ENCODE measurements at regions of chr17 and their contacts with region 1.

Region 1: DNA sequence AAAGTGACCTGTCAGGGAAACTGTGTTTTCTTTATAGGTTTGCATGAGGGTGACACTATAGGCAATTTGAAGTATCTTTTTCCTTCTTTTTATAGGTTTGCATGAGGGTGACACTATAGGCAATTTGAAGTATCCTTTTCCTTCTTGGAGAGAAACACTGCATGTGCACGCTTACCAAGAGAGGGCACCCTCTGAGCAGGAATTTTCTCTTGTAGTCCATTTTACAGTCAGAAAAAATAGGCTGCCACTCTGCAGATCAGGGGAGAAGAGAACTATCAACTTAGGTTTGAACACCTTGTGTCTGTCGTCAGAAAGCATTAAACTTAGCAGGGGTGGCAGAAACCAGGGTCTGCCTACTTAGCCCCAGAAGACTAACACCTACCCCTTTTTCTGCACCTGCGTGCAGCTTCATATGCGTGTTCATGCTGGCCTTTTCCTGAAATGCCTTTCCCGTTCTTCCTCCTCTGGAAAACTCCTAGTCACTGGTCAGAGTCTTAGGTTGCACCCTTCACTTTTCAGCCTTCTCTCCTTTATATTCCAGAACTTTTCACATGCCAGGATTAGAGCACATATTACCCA is 16.4 kb upstream of the SMIM36 start:
- DNase-seq: peak; percentile 74
- H3K4me3 ChIP-seq: no peak overlapping the region; a peak in 1 of 4 replicates
- H3K27ac ChIP-seq: no peak overlapping the region
- H3K4me1 ChIP-seq: peaks cover 0 to 2% of the 10 kb centered on the region in 2 experiments; a peak in 1 of 4 replicates
- H3K27me3 ChIP-seq: no peaks in the 10 kb centered on the region
- CTCF ChIP-seq: peak; percentile 87
- EP300 ChIP-seq: no peak
- RAD21 ChIP-seq: peak; percentile 99

Region 2: GRCh38 chr17:55273579-55274354 is 253.9 kb before region 1 on chr17:
- CTCF ChIA-PET with region 1: no interaction called
- POLR2A ChIA-PET with region 1: no interaction called
- DNase-seq: peak; percentile 68
- H3K4me3 ChIP-seq: no peak overlapping the region
- H3K27ac ChIP-seq: peak overlapping the region in 1 of 2 experiments; percentile 84; a peak in 2 of 4 replicates
- H3K4me1 ChIP-seq: peaks cover 7 to 30% of the 10 kb centered on the region in 2 experiments; a peak in 3 of 4 replicates
- H3K27me3 ChIP-seq: no peaks in the 10 kb centered on the region
- CTCF ChIP-seq: no peak
- EP300 ChIP-seq: 0 out of 4 replicates have a peak, but pooled peaks of 1 of the 2 experiments have one; percentile 41
- RAD21 ChIP-seq: 0 out of 2 replicates have a peak, but pooled peaks have one; percentile 1

Region 3: DNA sequence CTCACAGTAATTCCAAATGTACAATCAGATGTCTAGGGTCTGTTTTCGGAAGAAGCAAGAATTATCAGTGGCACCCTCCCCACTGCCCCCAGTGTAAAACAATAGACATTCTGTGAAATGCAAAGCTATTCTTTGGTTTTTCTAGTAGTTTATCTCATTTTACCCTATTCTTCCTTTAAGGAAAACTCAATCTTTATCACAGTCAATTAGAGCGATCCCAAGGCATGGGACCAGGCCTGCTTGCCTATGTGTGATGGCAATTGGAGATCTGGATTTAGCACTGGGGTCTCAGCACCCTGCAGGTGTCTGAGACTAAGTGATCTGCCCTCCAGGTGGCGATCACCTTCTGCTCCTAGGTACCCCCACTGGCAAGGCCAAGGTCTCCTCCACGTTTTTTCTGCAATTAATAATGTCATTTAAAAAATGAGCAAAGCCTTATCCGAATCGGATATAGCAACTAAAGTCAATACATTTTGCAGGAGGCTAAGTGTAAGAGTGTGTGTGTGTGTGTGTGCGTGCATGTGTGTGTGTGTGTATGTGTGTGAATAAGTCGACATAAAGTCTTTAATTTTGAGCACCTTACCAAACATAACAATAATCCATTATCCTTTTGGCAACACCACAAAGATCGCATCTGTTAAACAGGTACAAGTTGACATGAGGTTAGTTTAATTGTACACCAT is 203.2 kb before region 1 on chr17:
- CTCF ChIA-PET with region 1: no interaction called
- POLR2A ChIA-PET with region 1: no interaction called
- DNase-seq: no peak
- H3K4me3 ChIP-seq: no peak overlapping the region
- H3K27ac ChIP-seq: no peak overlapping the region
- H3K4me1 ChIP-seq: no peaks in the 10 kb centered on the region
- H3K27me3 ChIP-seq: no peaks in the 10 kb centered on the region
- CTCF ChIP-seq: no peak
- EP300 ChIP-seq: no peak
- RAD21 ChIP-seq: no peak

Region 4: GRCh38 chr17:55576996-55577586 is 49.5 kb after region 1 on chr17:
- CTCF ChIA-PET with region 1: interaction called, 15 read pairs
- POLR2A ChIA-PET with region 1: no interaction called
- DNase-seq: no peak
- H3K4me3 ChIP-seq: no peak overlapping the region
- H3K27ac ChIP-seq: peak overlapping the region in 1 of 2 experiments; percentile 18; a peak in 2 of 4 replicates
- H3K4me1 ChIP-seq: peaks cover 4 to 11% of the 10 kb centered on the region in 2 experiments; a peak in 1 of 4 replicates
- H3K27me3 ChIP-seq: no peaks in the 10 kb centered on the region
- CTCF ChIP-seq: no peak
- EP300 ChIP-seq: no peak
- RAD21 ChIP-seq: no peak

Region 5: DNA sequence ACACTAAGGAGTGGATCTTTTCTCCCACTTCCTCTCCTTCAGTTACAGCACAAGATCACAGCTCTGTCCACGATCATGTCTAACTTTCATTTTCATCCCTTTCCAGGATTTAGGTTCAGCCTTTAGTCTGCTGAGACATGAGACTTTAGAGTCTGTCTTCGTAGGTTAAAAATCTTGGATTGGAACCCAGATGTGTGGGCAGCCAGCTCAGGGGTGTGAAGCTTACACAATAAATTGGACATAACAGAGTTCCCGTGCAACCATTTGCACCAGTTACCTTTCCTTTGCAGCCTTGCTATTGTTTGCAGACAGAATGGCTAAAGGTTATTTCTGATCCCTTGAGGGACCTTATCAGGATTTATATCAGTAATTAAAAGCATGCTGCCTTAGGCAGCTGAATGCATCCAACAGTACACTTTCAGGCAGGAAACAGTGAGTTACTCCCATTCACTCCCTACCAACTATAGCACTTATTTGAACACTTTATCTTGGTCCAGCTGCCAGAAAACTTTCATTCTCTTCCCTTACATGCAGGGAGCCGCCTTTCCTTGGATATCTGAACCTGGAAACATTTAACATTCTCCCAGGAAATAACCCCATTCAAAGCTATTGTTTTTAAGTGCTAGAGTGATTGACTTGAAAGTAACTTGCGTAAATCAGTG is 107.8 kb after region 1 on chr17:
- CTCF ChIA-PET with region 1: interaction called, 96 read pairs
- POLR2A ChIA-PET with region 1: no interaction called
- DNase-seq: peak; percentile 44
- H3K4me3 ChIP-seq: peak overlapping the region; percentile 23 to 30; a peak in 2 of 4 replicates
- H3K27ac ChIP-seq: peak overlapping the region in 1 of 2 experiments; percentile 74; a peak in 1 of 4 replicates
- H3K4me1 ChIP-seq: peaks cover 0 to 21% of the 10 kb centered on the region in 2 experiments; a peak in 2 of 4 replicates
- H3K27me3 ChIP-seq: no peaks in the 10 kb centered on the region
- CTCF ChIP-seq: no peak
- EP300 ChIP-seq: peak in 1 of 2 experiments; percentile 65; a peak in 1 of 4 replicates
- RAD21 ChIP-seq: peak; percentile 26; the same call in 1 of the 2 replicates

Region 6: GRCh38 chr17:55699181-55699860 is 171.7 kb after region 1 on chr17:
- CTCF ChIA-PET with region 1: interaction called, 10 read pairs
- POLR2A ChIA-PET with region 1: no interaction called
- DNase-seq: no peak
- H3K4me3 ChIP-seq: no peak overlapping the region
- H3K27ac ChIP-seq: peak overlapping the region in 1 of 2 experiments; percentile 23; a peak in 1 of 4 replicates
- H3K4me1 ChIP-seq: peaks cover 5 to 23% of the 10 kb centered on the region in 2 experiments; a peak in 3 of 4 replicates
- H3K27me3 ChIP-seq: no peaks in the 10 kb centered on the region; the same call in 1 of the 2 replicates
- CTCF ChIP-seq: no peak
- EP300 ChIP-seq: no peak
- RAD21 ChIP-seq: no peak

Region 7: DNA sequence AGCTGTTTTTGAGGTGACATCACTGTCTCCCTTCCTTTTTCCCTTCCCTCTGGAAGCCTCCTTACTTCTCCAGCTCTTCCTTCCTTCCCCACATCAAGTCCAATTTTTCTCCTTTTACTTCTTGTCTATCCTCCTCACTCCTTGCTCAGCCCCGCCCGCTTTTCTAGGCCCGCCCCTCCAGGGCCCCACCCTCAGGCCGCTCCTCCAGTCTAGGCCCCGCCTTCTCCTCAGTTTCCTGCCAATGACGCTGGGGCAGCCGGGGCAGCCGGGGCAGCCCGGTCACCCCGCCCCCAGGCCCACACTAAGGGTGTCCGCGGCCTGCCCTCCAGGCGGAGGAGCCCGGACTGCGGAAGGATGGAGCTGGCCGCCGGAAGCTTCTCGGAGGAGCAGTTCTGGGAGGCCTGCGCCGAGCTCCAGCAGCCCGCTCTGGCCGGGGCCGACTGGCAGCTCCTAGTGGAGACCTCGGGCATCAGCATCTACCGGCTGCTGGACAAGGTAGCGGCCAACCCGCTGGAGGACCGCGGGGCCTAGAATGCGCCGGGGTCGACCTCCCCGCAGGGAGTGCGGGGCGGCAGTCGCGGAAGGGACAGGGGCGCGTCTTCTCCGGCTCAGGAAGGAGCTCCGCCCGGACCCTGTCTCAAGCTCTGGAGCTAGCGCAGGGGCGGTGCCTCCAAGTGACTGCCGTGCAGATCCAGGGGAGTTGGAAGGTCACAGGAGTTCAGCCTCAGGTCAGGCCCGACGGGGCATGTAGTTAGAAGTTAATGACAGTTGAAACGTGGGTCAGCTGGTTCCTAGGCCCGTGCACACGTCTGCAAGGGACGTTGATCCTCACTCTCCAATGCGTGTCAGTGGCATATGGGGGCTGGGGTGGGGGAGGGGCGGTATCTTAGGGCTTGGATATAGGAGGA is 223.4 kb after region 1 on chr17 and contains the start of gene PCTP:
- CTCF ChIA-PET with region 1: interaction called, 175 read pairs
- POLR2A ChIA-PET with region 1: no interaction called
- DNase-seq: peak; percentile 98
- H3K4me3 ChIP-seq: peak within 1 kb of the TSS; percentile 86 to 98
- H3K27ac ChIP-seq: peak within 1 kb of the TSS; percentile 74 to 94
- H3K4me1 ChIP-seq: peaks cover 0 to 10% of the 10 kb centered on the region in 2 experiments; a peak in 2 of 4 replicates
- H3K27me3 ChIP-seq: no peaks in the 10 kb centered on the region
- CTCF ChIP-seq: peak; percentile 52
- EP300 ChIP-seq: peak in 1 of 2 experiments; percentile 66; a peak in 1 of 4 replicates
- RAD21 ChIP-seq: peak; percentile 32
- polyA plus RNA-seq, gene PCTP: 20.8 and 25.1 TPM in 2 replicates

Region 8: DNA sequence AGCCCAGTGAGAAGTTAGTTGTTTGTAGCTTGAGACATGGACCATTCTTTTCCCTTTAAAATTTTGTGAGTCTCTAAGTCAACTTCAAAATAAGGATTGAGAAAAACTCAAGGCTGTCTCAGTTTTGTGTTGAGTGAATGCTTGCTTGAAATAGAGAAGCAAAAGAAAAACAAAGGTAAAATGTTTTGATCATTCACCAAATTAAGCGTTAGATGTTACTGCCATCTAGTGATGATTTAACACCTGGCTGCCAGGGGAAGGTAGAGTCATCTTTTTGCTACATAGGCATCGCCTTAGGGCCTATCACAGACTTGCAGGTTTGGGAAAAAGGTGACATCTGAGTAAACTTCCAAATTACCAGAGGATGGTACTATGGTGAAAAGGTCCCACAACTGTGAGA is 297.6 kb after region 1 on chr17:
- CTCF ChIA-PET with region 1: interaction called, 44 read pairs
- POLR2A ChIA-PET with region 1: no interaction called
- DNase-seq: no peak
- H3K4me3 ChIP-seq: no peak overlapping the region
- H3K27ac ChIP-seq: no peak overlapping the region
- H3K4me1 ChIP-seq: peaks cover 0 to 2% of the 10 kb centered on the region in 2 experiments; a peak in 2 of 4 replicates
- H3K27me3 ChIP-seq: peaks cover 4% of the 10 kb centered on the region; the same call in 1 of the 2 replicates
- CTCF ChIP-seq: peak; percentile 41
- EP300 ChIP-seq: no peak
- RAD21 ChIP-seq: peak; percentile 62

Measured in SK-N-SH (cell line).